ENCODE measurements at regions of chr2 and their contacts with region 1.

Region 1: DNA sequence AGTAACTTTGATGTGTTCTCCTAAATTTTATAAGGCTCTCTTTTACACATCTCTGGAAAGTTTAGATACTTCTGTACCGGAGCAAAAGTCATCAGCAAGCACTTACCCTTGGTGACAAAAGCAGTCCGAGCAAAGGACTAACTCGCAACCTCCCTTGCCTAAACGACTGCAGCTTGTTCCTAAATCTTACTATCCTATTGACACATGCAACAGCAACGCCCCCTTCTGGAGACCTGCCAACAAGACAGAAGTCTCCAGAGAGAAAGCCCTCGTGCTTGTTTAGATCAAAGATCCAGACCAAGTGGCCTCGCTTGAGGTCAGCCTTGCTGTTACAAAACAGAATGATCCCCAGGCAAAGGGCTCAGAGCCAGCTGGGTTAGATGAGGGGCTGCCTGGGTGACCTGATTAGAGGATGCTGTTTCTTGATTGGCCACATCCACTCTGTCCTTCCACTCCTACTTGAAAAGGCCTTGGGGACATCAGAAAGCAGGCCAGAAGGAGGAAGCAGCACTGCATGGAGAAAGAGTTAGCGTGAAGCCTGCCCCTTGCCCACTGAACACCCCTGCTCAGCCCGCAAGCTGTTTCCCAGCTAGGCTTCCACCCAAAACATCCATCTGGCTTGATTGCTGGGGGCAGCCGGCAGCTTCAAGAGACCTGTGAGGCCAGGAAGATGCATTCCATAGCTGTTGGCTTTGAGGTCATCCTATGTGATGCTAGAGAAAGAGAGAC is 94.3 kb downstream of the HNRNPLL start:
- DNase-seq: peak; percentile 74 to 89
- H3K4me3 ChIP-seq: no peak overlapping the region
- H3K27ac ChIP-seq: no peak overlapping the region
- H3K4me1 ChIP-seq: peaks cover 0 to 3% (median 0%) of the 10 kb centered on the region in 4 experiments; a peak in 1 of 7 replicates
- H3K27me3 ChIP-seq: peaks cover 0 to 8% (median 6%) of the 10 kb centered on the region in 4 experiments; a peak in 3 of 7 replicates
- CTCF ChIP-seq: peak; percentile 45 to 92 (median 91)
- EP300 ChIP-seq: no peak
- POLR2A ChIP-seq: no peak
- RAD21 ChIP-seq: peak; percentile 97 to 99

Region 2: GRCh38 chr2:38308821-38309220 is 199.7 kb before region 1 on chr2:
- CTCF ChIA-PET with region 1: interaction called, 94 read pairs
- POLR2A ChIA-PET with region 1: no interaction called
- DNase-seq: no peak
- H3K4me3 ChIP-seq: no peak overlapping the region
- H3K27ac ChIP-seq: no peak overlapping the region
- H3K4me1 ChIP-seq: no peaks in the 10 kb centered on the region
- H3K27me3 ChIP-seq: no peaks in the 10 kb centered on the region
- CTCF ChIP-seq: no peak
- EP300 ChIP-seq: no peak
- POLR2A ChIP-seq: no peak
- RAD21 ChIP-seq: no peak

Region 3: DNA sequence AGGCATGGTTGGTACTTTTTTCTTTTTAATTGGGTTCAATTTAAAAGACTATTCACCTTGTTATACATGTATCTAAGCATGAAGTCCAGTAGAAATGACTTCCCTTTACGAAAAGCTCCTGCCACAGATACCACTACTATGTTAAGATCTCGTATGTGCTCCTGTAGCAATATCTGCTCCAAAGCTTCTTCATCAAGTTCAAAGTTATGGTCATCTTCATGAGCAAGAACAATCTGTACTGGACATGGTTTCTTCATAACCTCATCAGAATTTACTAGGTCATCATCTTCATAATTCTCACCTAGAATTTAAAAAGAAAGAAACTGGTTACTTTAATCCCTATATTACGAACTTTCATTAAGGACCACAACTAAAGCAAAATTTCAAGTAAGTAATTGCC is 165.3 kb before region 1 on chr2:
- CTCF ChIA-PET with region 1: interaction called, 12 read pairs
- POLR2A ChIA-PET with region 1: no interaction called
- DNase-seq: no peak
- H3K4me3 ChIP-seq: no peak overlapping the region
- H3K27ac ChIP-seq: no peak overlapping the region
- H3K4me1 ChIP-seq: peaks cover 0 to 4% (median 0%) of the 10 kb centered on the region in 4 experiments; a peak in 2 of 7 replicates
- H3K27me3 ChIP-seq: no peaks in the 10 kb centered on the region
- CTCF ChIP-seq: no peak
- EP300 ChIP-seq: no peak
- POLR2A ChIP-seq: no peak
- RAD21 ChIP-seq: no peak

Region 4: DNA sequence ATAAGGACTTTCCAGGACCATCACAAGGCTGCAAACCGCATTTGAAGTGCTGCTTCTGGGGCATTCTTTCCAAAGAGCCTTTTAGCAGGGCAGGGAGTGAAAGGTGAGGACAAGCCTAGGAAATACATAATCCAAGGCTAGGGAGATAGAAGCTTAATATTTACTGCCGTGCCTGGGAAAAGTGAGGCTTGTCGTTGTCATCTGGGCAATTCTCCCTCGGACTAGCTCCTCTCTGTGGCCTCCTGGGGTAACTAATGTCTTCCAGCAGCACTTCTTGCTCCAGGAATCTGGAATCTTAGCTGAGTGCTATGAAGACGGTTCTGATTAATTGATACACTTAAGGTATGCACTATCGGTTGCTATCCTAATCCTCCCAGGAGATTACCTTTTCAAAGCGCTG is 62.1 kb before region 1 on chr2:
- CTCF ChIA-PET with region 1: interaction called, 12 read pairs
- POLR2A ChIA-PET with region 1: no interaction called
- DNase-seq: no peak
- H3K4me3 ChIP-seq: no peak overlapping the region
- H3K27ac ChIP-seq: no peak overlapping the region
- H3K4me1 ChIP-seq: peaks cover 4 to 28% (median 10%) of the 10 kb centered on the region in 4 experiments; a peak in 6 of 7 replicates
- H3K27me3 ChIP-seq: no peaks in the 10 kb centered on the region; a peak in 1 of 7 replicates
- CTCF ChIP-seq: peak in 2 of 3 experiments; percentile 13 to 14; a peak in 1 of 4 replicates
- EP300 ChIP-seq: no peak
- POLR2A ChIP-seq: no peak
- RAD21 ChIP-seq: peak; percentile 8 to 38; a peak in 1 of 4 replicates

Region 5: DNA sequence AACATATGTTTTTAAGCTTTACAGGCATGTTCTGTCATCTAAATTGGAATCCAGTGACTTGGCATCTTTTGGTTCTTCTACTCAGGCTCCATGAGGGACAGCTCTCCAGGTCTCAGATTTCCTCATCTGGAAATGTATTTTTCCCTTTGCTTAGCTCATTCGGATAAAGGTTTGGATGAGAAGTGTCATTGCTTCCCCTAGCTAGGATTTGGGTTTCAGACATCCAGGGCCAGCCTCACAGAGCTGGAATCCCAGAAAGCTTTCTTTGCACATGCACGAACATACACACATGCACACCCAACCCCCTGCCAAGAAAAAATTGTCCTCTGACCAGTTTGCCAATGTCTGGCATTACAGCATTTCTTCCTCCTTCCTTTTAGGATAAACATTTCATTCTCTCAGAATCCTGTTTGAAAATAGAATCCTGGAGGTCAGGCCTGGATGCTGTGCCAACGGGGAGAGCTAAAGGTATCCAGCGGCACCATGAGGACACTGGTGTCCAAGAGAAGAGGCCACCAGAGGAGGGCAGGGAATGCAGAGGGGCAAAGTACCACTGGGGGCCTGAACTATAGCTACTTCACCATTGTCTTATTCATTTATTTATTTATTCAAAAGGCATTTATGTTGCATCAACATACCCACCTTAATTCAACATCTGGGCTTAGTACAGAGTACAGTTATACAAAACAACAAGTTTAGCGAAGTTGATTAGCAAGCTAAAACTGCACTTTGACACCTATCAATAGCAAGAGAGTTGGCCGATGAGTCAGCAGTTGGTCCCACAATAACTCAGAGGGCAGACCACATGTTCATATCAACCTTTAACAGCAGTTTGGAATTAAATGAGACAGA is 33.5 kb before region 1 on chr2:
- CTCF ChIA-PET with region 1: interaction called, 34 read pairs
- POLR2A ChIA-PET with region 1: interaction called, 4 read pairs
- DNase-seq: no peak
- H3K4me3 ChIP-seq: no peak overlapping the region
- H3K27ac ChIP-seq: no peak overlapping the region
- H3K4me1 ChIP-seq: no peaks in the 10 kb centered on the region
- H3K27me3 ChIP-seq: no peaks in the 10 kb centered on the region
- CTCF ChIP-seq: no peak
- EP300 ChIP-seq: no peak
- POLR2A ChIP-seq: no peak
- RAD21 ChIP-seq: no peak

Region 6: DNA sequence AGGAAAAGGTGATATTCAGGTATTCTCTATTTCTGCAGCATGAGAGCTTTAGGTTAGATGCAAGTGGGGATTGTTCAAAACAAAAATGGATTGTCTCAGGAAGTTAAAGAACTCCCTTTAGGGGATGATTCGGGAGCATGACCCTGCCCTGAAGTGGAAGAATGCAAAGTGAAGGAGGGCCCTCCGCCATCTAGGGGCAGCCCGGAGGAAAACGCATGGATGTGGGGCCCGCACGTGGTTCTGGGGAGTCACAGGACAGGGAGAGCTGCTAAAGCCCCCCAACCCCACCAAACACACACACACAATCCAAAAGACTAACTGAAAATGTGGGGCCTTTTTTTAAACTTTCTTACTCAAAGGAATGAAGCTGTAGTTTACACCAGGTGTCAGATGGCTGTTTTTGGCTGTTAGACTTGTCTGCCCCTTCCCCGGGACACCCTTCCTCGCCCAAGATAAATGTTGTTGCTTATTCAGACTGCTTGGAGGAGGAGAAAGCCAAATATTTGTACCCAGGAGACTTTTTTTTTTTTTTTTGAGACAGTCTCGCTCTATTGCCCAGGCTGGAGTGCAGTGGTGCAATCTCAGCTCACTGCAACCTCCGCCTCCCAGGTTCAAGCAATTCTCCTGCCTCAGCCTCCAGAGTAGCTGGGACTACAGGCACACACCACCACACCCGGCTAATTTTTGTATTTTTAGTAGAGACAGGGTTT is 15.4 kb after region 1 on chr2:
- CTCF ChIA-PET with region 1: interaction called, 83 read pairs
- POLR2A ChIA-PET with region 1: no interaction called
- DNase-seq: peak in 1 of 2 experiments; percentile 72
- H3K4me3 ChIP-seq: no peak overlapping the region
- H3K27ac ChIP-seq: no peak overlapping the region
- H3K4me1 ChIP-seq: peaks cover 4 to 11% (median 6%) of the 10 kb centered on the region in 4 experiments; a peak in 6 of 7 replicates
- H3K27me3 ChIP-seq: 0 out of 7 replicates have a peak, but pooled peaks cover 0 to 2% (median 0%) of the 10 kb centered on the region in 4 experiments
- CTCF ChIP-seq: peak; percentile 46 to 72 (median 71)
- EP300 ChIP-seq: no peak
- POLR2A ChIP-seq: no peak
- RAD21 ChIP-seq: peak; percentile 47 to 62